Naive thymus-derived CD8-positive, alpha-beta T cell (primary cell): ENCODE measurements at regions of chr19 and their contacts with region 1.

Region 1: GRCh38 chr19:18058208-18059030 is 28.3 kb downstream of the IL12RB1 start:
- DNase-seq: peak; percentile 73 to 91 (median 84)
- ATAC-seq: peak; percentile 94 to 96
- H3K4me3 Mint-ChIP-seq: peak overlapping the region in 8 of 10 donors; percentile 29 to 69 (median 48)
- H3K27ac Mint-ChIP-seq: peak overlapping the region; percentile 54 to 94 (median 86)
- H3K4me1 Mint-ChIP-seq: peaks cover 7 to 22% (median 17%) of the 10 kb centered on the region in 4 donors
- H3K27me3 Mint-ChIP-seq: no peaks in the 10 kb centered on the region

Region 2: DNA sequence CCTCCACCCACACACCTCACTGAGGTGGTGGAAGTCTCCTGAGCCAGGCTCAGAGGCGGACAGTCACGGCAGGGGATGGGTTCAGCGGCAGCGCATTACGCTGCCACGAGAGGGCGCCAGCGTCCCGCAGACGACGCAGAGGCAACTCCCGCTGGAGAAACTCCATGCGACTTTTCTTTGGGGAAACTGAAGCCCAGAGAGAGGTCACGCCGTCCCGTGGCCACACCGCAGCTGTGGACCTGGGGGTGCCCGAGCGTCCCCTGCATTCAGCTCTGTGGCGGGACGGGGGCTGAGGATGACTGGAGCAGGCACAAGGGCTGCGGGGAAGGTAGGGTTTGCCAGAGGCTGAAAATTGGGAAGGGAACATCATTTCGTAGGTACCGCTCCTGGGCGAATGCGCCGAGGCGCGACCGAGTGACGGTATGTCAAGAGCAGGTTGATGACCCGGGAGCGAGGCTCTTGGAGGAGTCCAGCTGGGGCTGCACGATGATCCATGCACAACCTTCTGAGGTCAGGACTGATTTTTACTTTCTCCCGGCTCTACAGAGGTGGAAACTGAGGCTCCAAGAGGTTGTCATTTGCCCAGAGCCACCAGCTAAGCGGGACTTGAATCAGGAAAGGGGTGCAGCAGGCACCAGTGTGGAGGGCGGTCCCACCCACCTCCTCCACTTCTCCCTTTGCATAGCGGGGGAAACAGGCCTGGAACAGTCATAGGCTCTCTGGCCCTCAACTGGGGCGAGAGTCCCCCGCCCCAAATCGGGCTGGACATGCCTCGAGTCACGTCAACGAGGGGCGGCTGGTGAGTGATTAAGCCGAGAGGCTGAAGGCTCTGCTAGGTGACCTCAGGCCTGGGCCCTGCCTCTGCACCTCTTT is 51.1 kb before region 1 on chr19:
- POLR2A ChIA-PET with region 1: interaction called, 153 read pairs
- DNase-seq: peak; percentile 67 to 87 (median 82)
- ATAC-seq: peak; percentile 60 to 61
- H3K4me3 Mint-ChIP-seq: peak overlapping the region; percentile 84 to 98 (median 93)
- H3K27ac Mint-ChIP-seq: peak overlapping the region; percentile 68 to 99 (median 96)
- H3K4me1 Mint-ChIP-seq: peaks cover 13 to 52% (median 34%) of the 10 kb centered on the region in 4 donors
- H3K27me3 Mint-ChIP-seq: no peaks in the 10 kb centered on the region

Region 3: DNA sequence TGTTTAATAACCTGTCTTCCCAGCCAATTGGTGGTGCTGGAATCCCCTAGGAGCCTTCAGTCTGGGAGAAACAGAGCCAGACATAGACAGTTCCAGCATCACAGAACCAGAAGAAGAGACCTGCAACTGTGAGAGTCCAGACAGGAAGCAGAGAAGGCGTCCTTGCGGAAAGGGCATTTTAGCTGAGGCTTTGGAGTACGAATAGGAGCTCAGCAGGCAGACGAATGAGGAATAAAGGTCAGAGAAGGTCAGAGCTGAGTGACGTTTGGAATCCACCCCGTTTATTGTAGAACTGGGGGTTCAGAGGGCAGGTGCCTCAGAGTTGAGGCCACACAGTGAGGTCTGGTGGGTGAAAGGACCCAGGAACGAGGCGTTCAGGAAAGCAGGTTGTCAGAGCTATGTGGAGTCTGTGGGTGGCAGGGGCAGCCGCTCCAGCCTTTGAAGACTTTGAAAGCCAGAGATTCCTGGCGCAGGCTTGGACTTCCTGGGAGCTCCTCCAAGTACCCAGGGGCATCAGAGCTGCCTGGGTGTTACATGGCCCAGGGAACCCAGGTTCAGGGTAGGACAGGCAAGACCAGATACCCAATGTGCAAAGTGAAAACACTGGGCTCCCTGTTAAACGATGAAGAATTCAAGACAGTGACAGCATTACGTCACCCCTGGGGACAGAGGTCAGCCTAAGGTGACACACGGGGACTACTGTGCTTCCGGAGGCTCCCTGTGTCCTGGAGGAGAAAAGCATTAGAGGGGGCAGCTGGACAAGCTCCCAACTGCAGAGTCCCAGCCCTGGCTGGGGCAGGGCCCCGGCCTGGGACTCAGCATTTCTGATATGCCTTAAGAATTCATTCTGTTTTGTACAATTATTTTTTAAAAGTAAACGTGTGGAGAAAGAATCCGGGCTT is 45.0 kb before region 1 on chr19:
- POLR2A ChIA-PET with region 1: interaction called, 153 read pairs
- DNase-seq: peak in 1 of 10 donors; percentile 26
- ATAC-seq: peak; percentile 24 to 35
- H3K4me3 Mint-ChIP-seq: peak overlapping the region; percentile 61 to 95 (median 84)
- H3K27ac Mint-ChIP-seq: peak overlapping the region; percentile 95 to 100 (median 98)
- H3K4me1 Mint-ChIP-seq: peaks cover 35 to 75% (median 68%) of the 10 kb centered on the region in 4 donors
- H3K27me3 Mint-ChIP-seq: no peaks in the 10 kb centered on the region

Region 4: GRCh38 chr19:18021121-18021755 is 37.2 kb before region 1 on chr19:
- POLR2A ChIA-PET with region 1: interaction called, 40 read pairs
- DNase-seq: peak; percentile 50 to 89 (median 65)
- ATAC-seq: peak; percentile 43 to 67
- H3K4me3 Mint-ChIP-seq: peak overlapping the region; percentile 22 to 82 (median 74)
- H3K27ac Mint-ChIP-seq: peak overlapping the region; percentile 91 to 99 (median 98)
- H3K4me1 Mint-ChIP-seq: peaks cover 42 to 79% (median 73%) of the 10 kb centered on the region in 4 donors
- H3K27me3 Mint-ChIP-seq: peaks cover 0 to 1% (median 0%) of the 10 kb centered on the region in 5 donors

Region 5: GRCh38 chr19:18304458-18305310 is 246.3 kb after region 1 on chr19:
- POLR2A ChIA-PET with region 1: no interaction called
- DNase-seq: peak; percentile 66 to 92 (median 76)
- ATAC-seq: peak; percentile 70 to 76
- H3K4me3 Mint-ChIP-seq: peak overlapping the region; percentile 84 to 96 (median 93)
- H3K27ac Mint-ChIP-seq: peak overlapping the region; percentile 97 to 100 (median 98)
- H3K4me1 Mint-ChIP-seq: peaks cover 23 to 54% (median 48%) of the 10 kb centered on the region in 4 donors
- H3K27me3 Mint-ChIP-seq: no peaks in the 10 kb centered on the region